ENCODE measurements at regions of chr7 and their contacts with region 1.

Region 1: GRCh38 chr7:106717955-106718871 is 57.3 kb upstream of the CCDC71L start:
- DNase-seq: peak; percentile 75
- H3K4me3 Mint-ChIP-seq: no peak overlapping the region
- H3K27ac Mint-ChIP-seq: no peak overlapping the region
- H3K4me1 Mint-ChIP-seq: peaks cover 20% of the 10 kb centered on the region
- H3K27me3 Mint-ChIP-seq: no peaks in the 10 kb centered on the region

Region 2: DNA sequence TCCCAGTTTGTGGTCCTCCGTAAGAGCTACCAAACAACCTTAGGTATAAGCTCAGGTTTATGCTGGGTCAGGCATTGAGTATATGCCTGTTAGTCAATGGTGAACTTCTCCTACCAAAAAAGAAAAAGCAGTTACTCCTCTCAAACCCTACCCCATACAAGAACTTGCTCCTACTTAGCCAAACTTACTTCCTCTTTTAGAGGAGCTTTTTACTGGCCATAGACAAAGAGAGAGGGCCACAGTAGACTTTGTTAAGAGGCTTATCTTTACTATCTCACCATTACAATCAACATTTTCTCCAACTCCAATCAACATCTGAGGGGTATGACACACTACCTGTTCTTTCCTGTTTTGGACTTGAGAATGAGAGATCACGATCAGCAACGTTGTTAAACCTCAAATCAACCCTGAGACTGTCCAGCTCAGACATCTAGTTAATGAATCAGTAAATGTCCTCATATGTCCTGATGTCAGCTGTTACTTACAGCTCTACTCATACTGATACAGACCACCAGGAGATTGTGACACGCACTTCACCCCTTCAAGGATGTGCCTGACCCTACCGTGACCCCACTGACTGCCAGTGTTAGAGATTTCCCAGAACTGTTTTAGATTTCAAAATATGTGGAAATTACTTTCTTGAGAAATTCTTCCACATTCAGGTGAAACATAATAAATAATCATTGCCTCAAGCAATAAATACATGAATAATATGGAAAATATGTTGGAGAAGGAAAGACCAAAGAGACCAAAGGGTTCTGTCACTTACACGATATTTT is 38.9 kb before region 1 on chr7:
- CTCF ChIA-PET with region 1: interaction called, 5 read pairs
- POLR2A ChIA-PET with region 1: interaction called, 11 read pairs
- DNase-seq: peak; percentile 36
- H3K4me3 Mint-ChIP-seq: no peak overlapping the region
- H3K27ac Mint-ChIP-seq: peak overlapping the region; percentile 36
- H3K4me1 Mint-ChIP-seq: peaks cover 19% of the 10 kb centered on the region
- H3K27me3 Mint-ChIP-seq: no peaks in the 10 kb centered on the region

Region 3: DNA sequence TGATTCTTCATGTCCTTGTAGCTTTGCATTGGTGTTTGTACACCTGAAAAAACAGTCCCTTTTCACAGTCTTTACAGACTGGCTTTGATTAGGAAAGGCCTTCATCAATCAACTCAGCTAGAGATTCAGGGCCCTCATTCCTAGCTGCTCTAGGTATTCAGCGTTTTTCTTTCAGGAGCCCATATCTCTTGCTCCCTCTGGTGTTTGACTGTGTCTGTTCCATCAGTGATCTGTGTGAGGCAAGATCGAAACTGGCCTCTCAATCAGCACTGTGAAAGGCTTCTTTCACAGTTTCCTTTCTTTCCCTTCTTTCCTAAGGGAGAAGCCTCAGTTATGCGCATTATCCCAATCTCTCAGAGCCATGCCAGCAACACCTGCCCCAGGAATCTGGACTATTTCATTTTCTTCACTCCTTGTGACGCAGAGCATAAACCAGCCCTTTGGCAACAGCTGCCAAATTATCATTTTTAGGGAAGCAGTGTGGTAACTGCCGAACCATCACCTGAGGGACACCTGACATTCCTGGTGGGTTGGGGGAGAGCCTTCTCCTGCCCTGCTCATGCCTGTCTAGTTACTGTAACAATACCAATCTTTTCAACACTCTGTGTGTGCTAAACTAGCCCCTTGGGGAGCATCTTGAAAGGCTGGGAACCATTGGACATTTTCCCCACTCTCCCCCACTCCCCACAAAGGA is 18.4 kb after region 1 on chr7:
- CTCF ChIA-PET with region 1: interaction called, 33 read pairs
- POLR2A ChIA-PET with region 1: interaction called, 9 read pairs
- DNase-seq: peak; percentile 46
- H3K4me3 Mint-ChIP-seq: no peak overlapping the region
- H3K27ac Mint-ChIP-seq: no peak overlapping the region
- H3K4me1 Mint-ChIP-seq: peaks cover 31% of the 10 kb centered on the region
- H3K27me3 Mint-ChIP-seq: no peaks in the 10 kb centered on the region

Region 4: DNA sequence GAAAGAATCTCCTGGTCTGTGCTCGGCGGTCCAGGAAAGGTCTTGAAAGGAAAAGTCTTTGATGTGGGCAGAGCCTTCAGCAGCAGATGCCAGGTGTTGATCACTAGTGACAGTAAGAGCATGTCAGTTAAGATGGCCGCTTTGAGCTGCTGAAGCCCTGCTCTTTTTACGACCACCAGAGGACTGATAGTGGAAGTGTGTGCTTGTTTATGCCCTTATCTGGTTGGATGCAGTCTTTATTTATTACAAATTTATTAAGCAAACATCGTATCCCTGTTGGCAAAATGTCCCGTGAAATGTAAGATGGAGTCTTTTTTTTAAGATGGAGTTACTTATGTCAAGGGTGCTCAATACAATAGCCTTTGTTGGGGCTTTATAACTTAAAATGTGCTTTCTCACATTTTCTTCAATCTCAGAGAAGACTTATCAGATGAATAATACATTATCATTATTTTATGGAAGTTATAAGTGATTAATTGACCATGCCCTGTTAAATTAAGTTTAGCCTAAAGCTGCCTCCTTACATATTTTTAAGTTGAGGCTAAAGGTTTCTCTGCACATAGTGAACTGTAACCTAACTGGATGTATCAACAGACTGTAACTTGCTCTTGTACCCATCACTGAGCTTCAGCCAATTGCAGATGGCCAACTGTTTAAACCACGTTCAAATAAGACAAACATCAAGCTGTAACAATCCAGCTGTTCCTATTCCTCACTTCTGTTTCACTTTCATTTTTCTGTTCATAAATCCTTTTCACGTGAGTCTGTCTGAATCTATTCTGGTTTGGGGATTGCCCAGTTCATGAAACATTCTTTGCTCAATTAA is 49.5 kb after region 1 on chr7:
- CTCF ChIA-PET with region 1: no interaction called
- POLR2A ChIA-PET with region 1: interaction called, 11 read pairs
- DNase-seq: no peak
- H3K4me3 Mint-ChIP-seq: peak overlapping the region; percentile 56
- H3K27ac Mint-ChIP-seq: peak overlapping the region; percentile 16
- H3K4me1 Mint-ChIP-seq: peaks cover 29% of the 10 kb centered on the region
- H3K27me3 Mint-ChIP-seq: no peaks in the 10 kb centered on the region

Measured in activated CD4-positive, alpha-beta memory T cell treated with anti-CD3 and anti-CD28 coated beads, Interleukin-2, amount 10 ng/mL, durations not matched to agents 7 days and 5 days (primary cell).